Psoas muscle (tissue), 8 donors: ENCODE measurements at regions of chr2 and their contacts with region 1.

Region 1: DNA sequence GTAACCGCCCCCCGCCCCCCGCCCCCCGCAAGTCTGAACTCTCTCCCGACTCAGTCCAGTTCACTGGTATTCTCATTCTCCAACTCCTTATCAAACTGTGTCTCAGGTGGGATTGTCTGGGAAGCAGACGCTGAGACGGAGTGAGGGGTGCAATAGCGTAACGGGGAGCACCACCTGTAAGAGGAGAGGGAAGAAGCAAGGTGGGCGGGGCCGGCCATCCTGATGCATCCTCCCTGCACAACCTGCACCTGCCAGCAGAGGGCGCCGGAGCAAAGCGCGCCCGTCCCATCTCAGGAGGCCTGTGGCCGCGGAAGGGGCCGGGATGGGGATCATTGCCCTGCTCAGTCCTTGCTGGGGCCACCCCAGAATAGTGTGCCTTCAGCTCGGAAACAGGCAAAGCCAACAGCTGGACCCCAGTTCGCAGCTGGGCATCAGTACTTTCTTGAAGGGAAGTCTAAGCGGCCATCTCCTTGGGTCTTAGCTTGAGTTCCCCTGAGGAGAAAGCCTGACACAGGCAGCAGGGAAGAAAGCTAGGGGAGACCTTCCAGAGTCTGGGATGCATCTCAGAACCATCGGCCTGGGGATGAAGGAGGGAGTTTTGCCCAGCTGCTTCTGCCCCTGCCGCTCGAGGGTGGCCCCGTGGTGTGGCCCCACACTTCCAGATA is 208.0 kb downstream of the TFCP2L1 start:
- DNase-seq: peak; percentile 70 to 81
- ATAC-seq: peak; percentile 67 to 84 (median 75)
- H3K4me3 ChIP-seq: no peak overlapping the region
- H3K27ac ChIP-seq: no peak overlapping the region
- H3K4me1 ChIP-seq: no peaks in the 10 kb centered on the region
- H3K27me3 ChIP-seq: peaks cover 0 to 16% (median 9%) of the 10 kb centered on the region in 3 donors
- CTCF ChIP-seq: peak; percentile 89

Region 2: DNA sequence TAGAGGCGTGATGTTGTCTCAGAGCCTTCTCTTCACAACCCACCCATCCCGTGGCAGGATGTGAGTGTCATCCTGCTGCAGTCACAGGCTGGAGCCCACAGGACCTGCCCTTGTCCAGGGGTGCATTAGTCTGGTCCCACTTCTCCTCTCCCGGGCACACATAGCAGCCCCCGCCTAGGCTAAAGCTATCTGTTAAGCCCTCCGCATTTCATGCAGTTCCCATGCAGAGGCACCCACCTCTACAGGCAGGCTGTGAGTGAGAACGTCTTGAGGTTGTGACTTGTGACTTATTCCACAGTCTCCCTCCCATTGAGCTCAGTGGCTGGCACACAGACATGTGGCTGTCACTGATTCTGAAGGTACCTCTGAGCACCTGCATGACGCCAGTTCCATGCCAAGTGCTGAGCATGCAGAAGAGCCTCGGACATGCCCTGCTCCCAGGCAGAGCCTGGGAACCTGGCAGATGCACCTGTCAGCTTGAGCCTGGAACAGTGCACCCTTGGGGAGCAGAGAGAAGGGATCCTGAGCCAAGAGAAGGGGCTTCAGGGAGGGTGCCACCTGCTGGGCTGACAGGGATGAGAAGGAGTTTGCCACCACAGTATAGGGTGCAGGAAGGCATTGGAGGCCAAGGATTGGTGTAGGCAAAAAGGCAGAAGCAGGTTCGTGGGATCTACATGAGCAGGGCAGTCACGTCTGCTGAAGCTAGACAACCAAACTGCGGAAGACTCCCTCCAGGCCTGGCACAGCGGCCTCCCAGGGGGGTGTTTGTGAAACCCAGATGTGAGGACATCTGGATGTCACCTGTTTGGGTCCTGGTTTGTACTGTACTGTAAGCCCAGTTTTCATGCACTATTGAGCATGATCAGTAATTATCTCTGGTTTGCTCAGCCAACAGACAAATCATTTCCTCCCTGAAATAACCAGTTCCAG is 127.7 kb before region 1 on chr2:
- intact Hi-C with region 1: loop called in 1 of 2 experiments (anchors 5 kb)
- DNase-seq: no peak
- ATAC-seq: peak; percentile 43 to 79 (median 62)
- H3K4me3 ChIP-seq: no peak overlapping the region
- H3K27ac ChIP-seq: no peak overlapping the region
- H3K4me1 ChIP-seq: peaks cover 13% of the 10 kb centered on the region
- H3K27me3 ChIP-seq: no peaks in the 10 kb centered on the region
- CTCF ChIP-seq: peak; percentile 28

Region 3: DNA sequence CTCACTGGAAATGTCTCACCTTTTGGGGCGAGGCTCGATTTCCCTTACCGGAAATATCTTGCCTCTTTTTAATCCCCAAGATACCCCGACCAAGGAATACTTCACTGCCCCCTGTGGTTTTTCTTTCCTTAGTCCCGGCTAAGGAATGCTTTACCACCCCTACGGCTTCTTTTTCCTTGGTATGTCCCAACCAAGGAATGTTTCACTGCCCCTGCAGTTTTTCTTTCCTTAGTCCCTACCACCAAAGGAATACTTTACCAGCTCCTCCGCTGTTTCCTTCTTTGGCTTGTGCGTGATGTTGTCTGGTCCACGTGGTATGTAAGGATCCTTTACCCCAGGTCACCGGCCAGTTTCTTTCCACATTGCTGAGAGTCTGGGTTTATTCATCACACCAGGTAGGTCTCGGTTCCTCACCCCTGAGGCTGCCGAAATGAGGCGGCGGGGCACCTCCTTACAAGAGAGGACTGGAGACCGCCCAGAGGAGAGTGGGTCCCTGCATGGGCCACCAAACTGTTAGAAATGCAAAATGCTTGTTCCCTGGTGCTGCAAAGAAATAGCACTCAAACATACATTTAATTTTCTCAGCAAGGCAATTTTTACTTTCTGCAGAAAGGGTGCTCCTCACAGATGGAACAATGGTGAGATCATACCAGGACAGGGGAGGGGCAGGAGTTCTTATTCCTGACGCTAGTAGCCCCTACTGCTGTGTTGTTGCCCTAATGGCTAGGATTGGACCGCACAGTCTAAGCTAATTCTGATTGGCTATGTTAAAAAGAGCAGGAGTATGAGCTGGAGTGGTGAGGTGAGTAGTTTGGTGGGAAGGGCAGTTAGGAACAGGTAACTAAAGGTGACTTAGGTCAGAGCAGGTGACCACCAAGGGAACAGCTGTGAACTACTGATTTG is 605.6 kb after region 1 on chr2:
- intact Hi-C with region 1: no loop called
- DNase-seq: no peak
- ATAC-seq: no peak
- H3K4me3 ChIP-seq: no peak overlapping the region
- H3K27ac ChIP-seq: no peak overlapping the region
- H3K4me1 ChIP-seq: no peaks in the 10 kb centered on the region
- H3K27me3 ChIP-seq: no peaks in the 10 kb centered on the region
- CTCF ChIP-seq: no peak